Naive thymus-derived CD4-positive, alpha-beta T cell (primary cell): ENCODE measurements at regions of chr5 and their contacts with region 1.

Region 1: GRCh38 chr5:175657593-175658271 is at the start of gene HRH2:
- DNase-seq: peak; percentile 20 to 69 (median 46)
- ATAC-seq: peak; percentile 71
- H3K4me3 ChIP-seq: peak within 1 kb of the TSS; percentile 70
- H3K4me3 Mint-ChIP-seq: peak within 1 kb of the TSS; percentile 84 to 100 (median 96)
- H3K27ac ChIP-seq: peak within 1 kb of the TSS; percentile 71
- H3K27ac Mint-ChIP-seq: peak within 1 kb of the TSS; percentile 80 to 94 (median 88)
- H3K4me1 ChIP-seq: peaks cover 41 to 59% of the 10 kb centered on the region in 2 donors
- H3K4me1 Mint-ChIP-seq: peaks cover 77 to 98% (median 92%) of the 10 kb centered on the region in 7 donors
- H3K27me3 ChIP-seq: no peaks in the 10 kb centered on the region
- H3K27me3 Mint-ChIP-seq: peaks cover 0 to 2% (median 0%) of the 10 kb centered on the region in 5 donors
- total RNA-seq, gene HRH2: 5.6 to 26.3 (median 12.9) TPM

Region 2: GRCh38 chr5:174900240-174900865 is 757.4 kb before region 1 on chr5:
- CTCF ChIA-PET with region 1: no interaction called
- POLR2A ChIA-PET with region 1: no interaction called
- intact Hi-C with region 1: no loop called
- DNase-seq: no peak
- ATAC-seq: no peak
- H3K4me3 ChIP-seq: no peak overlapping the region
- H3K4me3 Mint-ChIP-seq: no peak overlapping the region
- H3K27ac ChIP-seq: no peak overlapping the region
- H3K27ac Mint-ChIP-seq: no peak overlapping the region
- H3K4me1 ChIP-seq: no peaks in the 10 kb centered on the region
- H3K4me1 Mint-ChIP-seq: peaks cover 0 to 2% (median 0%) of the 10 kb centered on the region in 7 donors
- H3K27me3 ChIP-seq: no peaks in the 10 kb centered on the region
- H3K27me3 Mint-ChIP-seq: peaks cover 0 to 37% (median 15%) of the 10 kb centered on the region in 5 donors

Region 3: GRCh38 chr5:175478384-175479124 is 179.2 kb before region 1 on chr5 and contains the start of gene SFXN1:
- CTCF ChIA-PET with region 1: no interaction called
- POLR2A ChIA-PET with region 1: no interaction called
- intact Hi-C with region 1: loop called (anchors 5 kb)
- DNase-seq: peak; percentile 56 to 90 (median 76)
- ATAC-seq: peak; percentile 82
- H3K4me3 ChIP-seq: peak within 1 kb of the TSS; percentile 93
- H3K4me3 Mint-ChIP-seq: peak within 1 kb of the TSS; percentile 95 to 98 (median 98)
- H3K27ac ChIP-seq: peak within 1 kb of the TSS; percentile 72
- H3K27ac Mint-ChIP-seq: peak within 1 kb of the TSS; percentile 71 to 98 (median 95)
- H3K4me1 ChIP-seq: peaks cover 29 to 34% of the 10 kb centered on the region in 2 donors
- H3K4me1 Mint-ChIP-seq: peaks cover 33 to 64% (median 54%) of the 10 kb centered on the region in 7 donors
- H3K27me3 ChIP-seq: no peaks in the 10 kb centered on the region
- H3K27me3 Mint-ChIP-seq: peaks cover 0 to 19% (median 4%) of the 10 kb centered on the region in 5 donors
- total RNA-seq, gene SFXN1: 58.7 to 177 (median 88.9) TPM

Region 4: GRCh38 chr5:175617447-175617846 is 40.3 kb before region 1 on chr5:
- CTCF ChIA-PET with region 1: no interaction called
- POLR2A ChIA-PET with region 1: no interaction called
- intact Hi-C with region 1: loop called (anchors 2 to 5 kb)
- DNase-seq: no peak
- ATAC-seq: no peak
- H3K4me3 ChIP-seq: no peak overlapping the region
- H3K4me3 Mint-ChIP-seq: no peak overlapping the region
- H3K27ac ChIP-seq: no peak overlapping the region
- H3K27ac Mint-ChIP-seq: no peak overlapping the region
- H3K4me1 ChIP-seq: no peaks in the 10 kb centered on the region
- H3K4me1 Mint-ChIP-seq: peaks cover 7 to 32% (median 14%) of the 10 kb centered on the region in 7 donors
- H3K27me3 ChIP-seq: no peaks in the 10 kb centered on the region
- H3K27me3 Mint-ChIP-seq: peaks cover 0 to 10% (median 0%) of the 10 kb centered on the region in 5 donors

Region 5: GRCh38 chr5:175696139-175696854 is 38.6 kb after region 1 on chr5:
- CTCF ChIA-PET with region 1: interaction called, 3 read pairs
- POLR2A ChIA-PET with region 1: interaction called, 4 read pairs
- intact Hi-C with region 1: loop called (anchors 1 kb)
- DNase-seq: peak; percentile 50 to 77 (median 73)
- ATAC-seq: peak; percentile 86
- H3K4me3 ChIP-seq: peak overlapping the region; percentile 10
- H3K4me3 Mint-ChIP-seq: peak overlapping the region; percentile 25 to 81 (median 67)
- H3K27ac ChIP-seq: peak overlapping the region; percentile 38
- H3K27ac Mint-ChIP-seq: peak overlapping the region; percentile 72 to 92 (median 87)
- H3K4me1 ChIP-seq: peaks cover 8 to 11% of the 10 kb centered on the region in 2 donors
- H3K4me1 Mint-ChIP-seq: peaks cover 31 to 56% (median 53%) of the 10 kb centered on the region in 7 donors
- H3K27me3 ChIP-seq: no peaks in the 10 kb centered on the region
- H3K27me3 Mint-ChIP-seq: no peaks in the 10 kb centered on the region

Region 6: GRCh38 chr5:176361437-176362232 is 703.9 kb after region 1 on chr5 and contains the start of gene KIAA1191:
- CTCF ChIA-PET with region 1: no interaction called
- POLR2A ChIA-PET with region 1: no interaction called
- intact Hi-C with region 1: loop called in 1 of 2 experiments (anchors 10 kb)
- DNase-seq: peak; percentile 80 to 96 (median 93)
- ATAC-seq: peak; percentile 96
- H3K4me3 ChIP-seq: peak within 1 kb of the TSS; percentile 82
- H3K4me3 Mint-ChIP-seq: peak within 1 kb of the TSS; percentile 93 to 99 (median 98)
- H3K27ac ChIP-seq: peak within 1 kb of the TSS; percentile 80
- H3K27ac Mint-ChIP-seq: peak within 1 kb of the TSS; percentile 91 to 99 (median 94)
- H3K4me1 ChIP-seq: peaks cover 19 to 24% of the 10 kb centered on the region in 2 donors
- H3K4me1 Mint-ChIP-seq: peaks cover 21 to 49% (median 38%) of the 10 kb centered on the region in 7 donors
- H3K27me3 ChIP-seq: no peaks in the 10 kb centered on the region
- H3K27me3 Mint-ChIP-seq: no peaks in the 10 kb centered on the region
- total RNA-seq, gene KIAA1191: 59.4 to 76.6 (median 65.9) TPM